ENCODE measurements at regions of chr1 and their contacts with region 1.

Region 1: DNA sequence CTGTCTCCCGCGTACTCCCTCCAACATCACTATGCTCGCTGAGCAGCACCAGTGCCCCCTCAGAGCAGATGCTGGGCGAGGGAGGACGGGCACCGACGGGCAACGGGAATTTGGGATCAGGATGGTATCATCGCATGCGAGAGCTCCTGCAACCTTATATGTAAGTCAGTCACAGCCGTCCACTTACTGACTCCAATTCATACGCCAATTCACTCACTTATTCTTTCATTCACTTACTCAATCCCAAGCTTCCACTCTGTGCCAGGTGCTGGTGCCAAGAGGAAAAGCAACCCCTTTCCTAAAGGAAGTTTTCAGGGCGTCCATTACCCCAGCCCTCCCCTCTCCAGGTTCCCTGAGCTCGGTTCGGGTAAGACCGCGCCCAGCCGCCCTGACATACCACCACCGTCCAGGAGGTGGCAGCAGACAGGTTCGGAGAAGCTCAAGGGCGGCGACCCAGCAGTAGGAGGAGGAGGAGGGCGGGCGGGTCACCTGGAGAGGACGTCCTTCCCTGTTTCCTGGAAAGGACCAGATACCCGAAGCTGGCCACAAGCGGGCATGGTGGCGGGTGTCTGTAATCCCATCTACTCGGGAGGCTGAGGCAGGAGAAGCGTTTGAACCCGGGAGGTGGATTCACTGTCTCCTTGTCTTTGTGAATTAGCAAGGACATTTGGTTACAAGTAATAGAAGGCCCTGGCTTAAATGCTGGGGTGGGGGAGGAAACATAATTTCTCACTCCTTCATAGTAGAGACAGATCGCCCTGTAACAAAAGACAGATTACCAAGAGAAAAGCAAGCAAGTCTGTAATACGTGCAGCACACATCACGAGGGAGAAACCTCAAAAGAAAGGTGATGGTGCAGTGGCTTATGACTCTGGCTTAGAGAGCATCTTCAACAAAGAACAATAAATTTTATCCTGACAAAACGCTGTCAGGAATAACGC is 7.6 kb upstream of the IL22RA1 start:
- DNase-seq: peak; percentile 56 to 89 (median 77)
- ATAC-seq: peak; percentile 96
- H3K4me3 ChIP-seq: peak overlapping the region; percentile 34
- H3K4me3 Mint-ChIP-seq: peak overlapping the region; percentile 32 to 82 (median 71)
- H3K27ac ChIP-seq: no peak overlapping the region
- H3K27ac Mint-ChIP-seq: peak overlapping the region in 2 of 9 donors; percentile 54 to 61
- H3K4me1 ChIP-seq: peaks cover 4 to 10% of the 10 kb centered on the region in 2 donors
- H3K4me1 Mint-ChIP-seq: peaks cover 9 to 18% (median 14%) of the 10 kb centered on the region in 7 donors
- H3K27me3 ChIP-seq: no peaks in the 10 kb centered on the region
- H3K27me3 Mint-ChIP-seq: peaks cover 27 to 51% (median 39%) of the 10 kb centered on the region in 5 donors

Region 2: DNA sequence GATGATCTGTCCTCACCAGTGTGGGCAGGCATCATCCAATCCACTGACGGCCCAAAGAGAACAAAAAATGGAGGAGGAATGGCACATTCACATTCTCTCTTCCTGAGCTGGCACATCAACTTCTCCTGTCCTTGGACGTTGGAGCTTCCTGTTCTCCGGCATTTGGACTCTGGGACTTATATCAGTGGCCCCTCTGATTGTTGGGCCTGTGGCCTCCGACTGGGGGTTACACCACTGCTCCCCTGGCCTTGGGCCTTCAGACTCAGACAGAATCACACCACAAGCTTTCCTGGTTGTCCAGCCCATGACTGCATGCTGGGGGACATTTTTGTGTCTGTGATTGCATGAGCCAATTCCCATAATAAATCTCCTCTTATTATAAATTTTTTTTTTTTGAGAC is 16.5 kb after region 1 on chr1:
- CTCF ChIA-PET with region 1: no interaction called
- POLR2A ChIA-PET with region 1: no interaction called
- intact Hi-C with region 1: no loop called
- DNase-seq: no peak
- ATAC-seq: no peak
- H3K4me3 ChIP-seq: no peak overlapping the region
- H3K4me3 Mint-ChIP-seq: no peak overlapping the region
- H3K27ac ChIP-seq: no peak overlapping the region
- H3K27ac Mint-ChIP-seq: no peak overlapping the region
- H3K4me1 ChIP-seq: no peaks in the 10 kb centered on the region
- H3K4me1 Mint-ChIP-seq: peaks cover 0 to 5% (median 4%) of the 10 kb centered on the region in 7 donors
- H3K27me3 ChIP-seq: no peaks in the 10 kb centered on the region
- H3K27me3 Mint-ChIP-seq: no peaks in the 10 kb centered on the region

Region 3: DNA sequence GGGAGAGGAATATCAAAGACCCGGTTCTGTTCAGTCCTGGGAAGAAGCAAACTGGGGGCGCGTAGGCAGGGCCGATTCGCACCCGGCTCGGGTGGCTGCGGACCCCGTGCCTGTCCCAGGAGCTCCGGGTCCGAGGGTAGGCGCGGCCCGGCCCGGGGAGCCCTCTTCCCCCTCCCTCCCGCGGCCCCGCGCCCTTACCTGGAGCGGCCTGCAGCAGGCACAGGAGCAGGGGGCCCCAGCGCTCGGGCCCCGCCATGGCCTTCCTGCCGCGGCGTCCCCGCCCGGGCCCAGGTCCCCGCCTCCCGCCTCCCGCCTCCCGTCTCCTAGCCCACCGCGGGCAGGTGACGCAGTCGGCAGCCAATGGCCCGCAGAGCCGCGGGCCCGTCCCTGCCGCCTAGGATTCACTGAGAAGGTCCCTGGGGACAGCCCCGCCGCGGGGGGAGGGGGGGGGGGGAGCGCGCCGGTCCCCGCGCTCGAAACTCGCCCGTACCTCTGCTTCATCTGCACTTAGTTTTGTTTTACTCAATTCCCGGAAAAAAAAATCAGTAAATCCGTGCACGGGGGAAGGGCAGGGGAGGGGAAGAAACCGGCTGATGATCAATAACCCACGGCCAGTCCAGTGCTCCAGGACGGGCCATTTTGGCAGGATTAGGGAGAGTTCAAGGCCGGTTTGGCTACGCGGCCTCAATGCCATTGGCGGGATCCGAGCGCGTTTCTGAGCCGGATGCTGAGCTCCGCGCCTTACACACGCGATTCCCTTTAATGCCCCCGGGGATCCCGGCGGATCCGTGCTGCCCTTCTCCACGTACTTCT is 36.7 kb after region 1 on chr1 and contains the start of gene IFNLR1:
- CTCF ChIA-PET with region 1: no interaction called
- POLR2A ChIA-PET with region 1: no interaction called
- intact Hi-C with region 1: loop called (anchors 5 kb)
- DNase-seq: peak; percentile 12 to 83 (median 28)
- ATAC-seq: peak; percentile 78
- H3K4me3 ChIP-seq: peak within 1 kb of the TSS; percentile 73
- H3K4me3 Mint-ChIP-seq: peak within 1 kb of the TSS; percentile 79 to 91 (median 85)
- H3K27ac ChIP-seq: peak within 1 kb of the TSS; percentile 65
- H3K27ac Mint-ChIP-seq: peak within 1 kb of the TSS; percentile 34 to 74 (median 63)
- H3K4me1 ChIP-seq: peaks cover 16 to 27% of the 10 kb centered on the region in 2 donors
- H3K4me1 Mint-ChIP-seq: peaks cover 16 to 40% (median 32%) of the 10 kb centered on the region in 7 donors
- H3K27me3 ChIP-seq: no peaks in the 10 kb centered on the region
- H3K27me3 Mint-ChIP-seq: peaks cover 0 to 13% (median 0%) of the 10 kb centered on the region in 5 donors
- total RNA-seq, gene IFNLR1: 1.0 to 3.9 (median 2.6) TPM

Region 4: GRCh38 chr1:24635195-24635843 is 484.8 kb after region 1 on chr1:
- CTCF ChIA-PET with region 1: interaction called, 3 read pairs
- POLR2A ChIA-PET with region 1: no interaction called
- intact Hi-C with region 1: loop called in 1 of 2 experiments (anchors 1 kb)
- DNase-seq: peak in 7 of 9 donors; percentile 39 to 69 (median 62)
- ATAC-seq: peak; percentile 85
- H3K4me3 ChIP-seq: no peak overlapping the region
- H3K4me3 Mint-ChIP-seq: no peak overlapping the region
- H3K27ac ChIP-seq: no peak overlapping the region
- H3K27ac Mint-ChIP-seq: peak overlapping the region in 5 of 9 donors; percentile 0 to 77 (median 64)
- H3K4me1 ChIP-seq: no peaks in the 10 kb centered on the region
- H3K4me1 Mint-ChIP-seq: peaks cover 2 to 14% (median 8%) of the 10 kb centered on the region in 7 donors
- H3K27me3 ChIP-seq: no peaks in the 10 kb centered on the region
- H3K27me3 Mint-ChIP-seq: peaks cover 4 to 21% (median 8%) of the 10 kb centered on the region in 5 donors

Region 5: GRCh38 chr1:24830680-24831272 is 680.3 kb after region 1 on chr1:
- CTCF ChIA-PET with region 1: interaction called, 5 read pairs
- POLR2A ChIA-PET with region 1: no interaction called
- intact Hi-C with region 1: loop called in 1 of 2 experiments (anchors 2 kb)
- DNase-seq: peak in 7 of 9 donors; percentile 17 to 54 (median 48)
- ATAC-seq: peak; percentile 67
- H3K4me3 ChIP-seq: no peak overlapping the region
- H3K4me3 Mint-ChIP-seq: no peak overlapping the region
- H3K27ac ChIP-seq: no peak overlapping the region
- H3K27ac Mint-ChIP-seq: no peak overlapping the region
- H3K4me1 ChIP-seq: no peaks in the 10 kb centered on the region
- H3K4me1 Mint-ChIP-seq: peaks cover 0 to 7% (median 0%) of the 10 kb centered on the region in 7 donors
- H3K27me3 ChIP-seq: no peaks in the 10 kb centered on the region
- H3K27me3 Mint-ChIP-seq: peaks cover 0 to 5% (median 0%) of the 10 kb centered on the region in 5 donors

Measured in naive thymus-derived CD4-positive, alpha-beta T cell (primary cell).